PC-9 (cell line): ENCODE measurements at regions of chr1 and their contacts with region 1.

Region 1: GRCh38 chr1:214261206-214262123 is 19.5 kb upstream of the SMYD2 start:
- DNase-seq: peak; percentile 51 to 80
- H3K4me3 ChIP-seq: no peak overlapping the region; the same call in 1 of the 2 replicates
- H3K27ac ChIP-seq: no peak overlapping the region
- H3K4me1 ChIP-seq: peaks cover 30% of the 10 kb centered on the region
- H3K27me3 ChIP-seq: no peaks in the 10 kb centered on the region
- CTCF ChIP-seq: peak; percentile 87

Region 2: GRCh38 chr1:213070406-213070805 is 1191.1 kb before region 1 on chr1:
- CTCF ChIA-PET with region 1: interaction called, 12 read pairs
- POLR2A ChIA-PET with region 1: no interaction called
- intact Hi-C with region 1: no loop called
- DNase-seq: no peak
- H3K4me3 ChIP-seq: no peak overlapping the region
- H3K27ac ChIP-seq: no peak overlapping the region
- H3K4me1 ChIP-seq: no peaks in the 10 kb centered on the region
- H3K27me3 ChIP-seq: no peaks in the 10 kb centered on the region
- CTCF ChIP-seq: no peak

Region 3: GRCh38 chr1:214174508-214175199 is 86.8 kb before region 1 on chr1:
- CTCF ChIA-PET with region 1: no interaction called
- POLR2A ChIA-PET with region 1: no interaction called
- intact Hi-C with region 1: no loop called
- DNase-seq: no peak
- H3K4me3 ChIP-seq: no peak overlapping the region
- H3K27ac ChIP-seq: no peak overlapping the region
- H3K4me1 ChIP-seq: no peaks in the 10 kb centered on the region
- H3K27me3 ChIP-seq: no peaks in the 10 kb centered on the region
- CTCF ChIP-seq: no peak

Region 4: GRCh38 chr1:214632091-214632490 is 370.6 kb after region 1 on chr1:
- CTCF ChIA-PET with region 1: no interaction called
- POLR2A ChIA-PET with region 1: no interaction called
- intact Hi-C with region 1: loop called (anchors 5 kb)
- DNase-seq: no peak
- H3K4me3 ChIP-seq: no peak overlapping the region
- H3K27ac ChIP-seq: no peak overlapping the region
- H3K4me1 ChIP-seq: no peaks in the 10 kb centered on the region
- H3K27me3 ChIP-seq: no peaks in the 10 kb centered on the region
- CTCF ChIP-seq: no peak